ENCODE measurements at regions of chr9 and their contacts with region 1.

Region 1: GRCh38 chr9:32579706-32580331 is 6.9 kb upstream of the NDUFB6 start:
- DNase-seq: peak; percentile 60 to 87 (median 80)
- ATAC-seq: peak; percentile 78
- H3K4me3 ChIP-seq: no peak overlapping the region
- H3K4me3 Mint-ChIP-seq: no peak overlapping the region
- H3K27ac ChIP-seq: no peak overlapping the region
- H3K27ac Mint-ChIP-seq: no peak overlapping the region
- H3K4me1 ChIP-seq: no peaks in the 10 kb centered on the region
- H3K4me1 Mint-ChIP-seq: no peaks in the 10 kb centered on the region
- H3K27me3 ChIP-seq: no peaks in the 10 kb centered on the region
- H3K27me3 Mint-ChIP-seq: peaks cover 12% of the 10 kb centered on the region
- CTCF ChIP-seq: peak; percentile 98

Region 2: GRCh38 chr9:32431940-32432555 is 147.8 kb before region 1 on chr9:
- CTCF ChIA-PET with region 1: interaction called, 5 read pairs
- POLR2A ChIA-PET with region 1: no interaction called
- intact Hi-C with region 1: loop called (anchors 5 kb)
- DNase-seq: peak in 8 of 9 experiments; percentile 5 to 57 (median 50)
- ATAC-seq: peak; percentile 46
- H3K4me3 ChIP-seq: no peak overlapping the region
- H3K4me3 Mint-ChIP-seq: no peak overlapping the region
- H3K27ac ChIP-seq: no peak overlapping the region
- H3K27ac Mint-ChIP-seq: no peak overlapping the region
- H3K4me1 ChIP-seq: no peaks in the 10 kb centered on the region
- H3K4me1 Mint-ChIP-seq: no peaks in the 10 kb centered on the region
- H3K27me3 ChIP-seq: no peaks in the 10 kb centered on the region
- H3K27me3 Mint-ChIP-seq: no peaks in the 10 kb centered on the region
- CTCF ChIP-seq: peak; percentile 40

Region 3: DNA sequence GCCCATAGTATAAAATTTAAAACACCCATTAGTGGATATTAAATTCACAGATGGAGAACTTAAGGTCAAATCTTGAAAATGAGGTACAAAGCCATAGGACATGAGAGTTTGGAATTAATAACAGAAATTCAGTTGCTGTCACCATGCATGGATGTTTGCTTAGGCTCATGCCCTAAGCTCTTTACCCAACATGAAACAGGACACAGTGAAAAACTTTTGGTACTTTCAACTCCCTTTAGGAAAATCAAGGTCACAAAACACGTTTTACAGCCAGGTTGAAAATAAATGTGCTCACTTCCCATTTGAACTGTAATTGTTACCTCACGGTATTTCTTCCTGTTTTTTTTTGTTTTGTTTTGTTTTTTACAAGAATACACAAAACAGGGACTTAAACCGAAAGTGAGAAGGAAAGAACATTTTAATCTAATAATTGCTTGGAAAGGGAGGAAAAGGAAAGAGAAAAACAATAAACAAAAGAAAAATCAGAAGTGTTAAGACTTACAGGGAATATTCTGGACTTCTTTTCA is 21.3 kb before region 1 on chr9:
- CTCF ChIA-PET with region 1: interaction called, 13 read pairs
- POLR2A ChIA-PET with region 1: no interaction called
- intact Hi-C with region 1: no loop called
- DNase-seq: no peak
- ATAC-seq: no peak
- H3K4me3 ChIP-seq: no peak overlapping the region
- H3K4me3 Mint-ChIP-seq: no peak overlapping the region
- H3K27ac ChIP-seq: no peak overlapping the region
- H3K27ac Mint-ChIP-seq: peak overlapping the region; percentile 53
- H3K4me1 ChIP-seq: peaks cover 4% of the 10 kb centered on the region
- H3K4me1 Mint-ChIP-seq: peaks cover 46% of the 10 kb centered on the region
- H3K27me3 ChIP-seq: no peaks in the 10 kb centered on the region
- H3K27me3 Mint-ChIP-seq: no peaks in the 10 kb centered on the region
- CTCF ChIP-seq: no peak

Region 4: DNA sequence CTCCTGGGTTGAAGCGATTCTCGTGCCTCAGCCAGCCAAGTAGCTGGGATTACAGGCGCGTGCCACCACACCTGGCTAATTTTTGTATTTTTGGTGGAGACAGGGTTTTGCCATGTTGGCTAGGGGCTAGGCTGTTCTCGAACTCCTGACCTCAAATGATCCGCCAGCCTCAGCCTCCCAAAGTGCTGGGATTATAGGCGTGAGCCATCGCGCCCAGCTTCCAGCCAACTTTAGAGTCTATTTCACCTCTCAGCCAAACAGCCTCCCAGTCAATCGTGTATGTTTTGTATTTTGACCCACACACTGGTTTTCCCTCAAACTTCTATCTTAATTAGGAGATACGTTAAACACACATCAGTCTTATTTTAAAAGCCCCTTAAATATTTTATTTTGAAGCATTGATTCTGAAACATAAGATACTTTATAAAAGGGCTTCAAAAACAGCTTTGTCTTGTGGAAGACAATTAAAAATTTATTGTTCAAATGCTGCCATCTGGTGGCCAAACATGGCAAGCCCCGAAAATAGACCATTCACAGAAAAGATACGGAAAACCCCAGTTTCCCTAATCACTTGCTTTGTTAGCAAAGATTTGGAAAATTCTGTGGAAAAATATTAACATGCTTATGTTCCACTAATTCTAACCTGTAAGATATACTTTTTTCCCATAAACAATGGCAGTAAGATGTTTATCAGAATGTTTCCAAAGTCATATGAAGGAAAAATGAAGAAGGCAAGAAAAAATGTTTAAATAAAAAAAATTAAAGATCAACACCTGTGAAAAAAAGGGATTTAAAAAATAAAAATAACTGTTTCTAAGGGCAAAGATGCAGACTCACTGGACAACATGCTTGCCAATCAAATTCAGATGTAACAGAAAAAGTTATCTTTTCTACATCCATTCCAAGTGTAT is 388.5 kb after region 1 on chr9:
- CTCF ChIA-PET with region 1: interaction called, 25 read pairs
- POLR2A ChIA-PET with region 1: no interaction called
- intact Hi-C with region 1: loop called (anchors 1 to 2 kb)
- DNase-seq: peak; percentile 8 to 69 (median 55)
- ATAC-seq: no peak
- H3K4me3 ChIP-seq: no peak overlapping the region
- H3K4me3 Mint-ChIP-seq: no peak overlapping the region
- H3K27ac ChIP-seq: no peak overlapping the region
- H3K27ac Mint-ChIP-seq: peak overlapping the region; percentile 34
- H3K4me1 ChIP-seq: no peaks in the 10 kb centered on the region
- H3K4me1 Mint-ChIP-seq: peaks cover 2% of the 10 kb centered on the region
- H3K27me3 ChIP-seq: no peaks in the 10 kb centered on the region
- H3K27me3 Mint-ChIP-seq: no peaks in the 10 kb centered on the region
- CTCF ChIP-seq: peak; percentile 84

Region 5: DNA sequence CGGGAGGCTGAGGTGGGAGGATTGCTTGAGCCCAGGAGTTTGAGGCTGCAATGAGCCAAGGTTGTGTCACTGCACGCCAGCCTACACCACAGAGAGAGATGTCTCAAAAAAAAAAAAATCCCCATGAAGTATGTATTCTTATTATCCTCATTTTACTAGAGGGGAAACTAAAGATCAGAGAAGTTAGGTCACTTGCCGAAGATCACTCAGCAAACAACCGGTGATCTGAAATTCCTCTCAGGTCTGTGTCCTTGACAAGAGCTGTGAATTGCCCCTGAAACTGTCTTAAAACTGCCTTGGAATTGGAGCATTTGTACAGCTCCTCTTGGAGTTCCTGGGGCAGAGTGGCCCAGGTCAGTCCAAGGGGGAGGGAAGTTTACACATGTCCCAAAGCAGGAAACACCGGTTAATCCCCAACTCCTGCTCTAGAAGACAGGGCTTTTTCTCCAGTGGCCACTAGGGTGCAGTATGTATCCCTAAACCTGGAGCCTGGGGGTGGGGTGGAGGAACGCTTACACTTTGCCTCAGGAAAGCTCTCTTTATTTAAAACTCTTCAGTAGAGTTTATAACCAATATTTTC is 794.9 kb after region 1 on chr9:
- CTCF ChIA-PET with region 1: no interaction called
- POLR2A ChIA-PET with region 1: no interaction called
- intact Hi-C with region 1: no loop called
- DNase-seq: peak; percentile 22 to 79 (median 70)
- ATAC-seq: peak; percentile 95
- H3K4me3 ChIP-seq: no peak overlapping the region
- H3K4me3 Mint-ChIP-seq: peak overlapping the region; percentile 54
- H3K27ac ChIP-seq: no peak overlapping the region
- H3K27ac Mint-ChIP-seq: no peak overlapping the region
- H3K4me1 ChIP-seq: no peaks in the 10 kb centered on the region
- H3K4me1 Mint-ChIP-seq: peaks cover 9% of the 10 kb centered on the region
- H3K27me3 ChIP-seq: no peaks in the 10 kb centered on the region
- H3K27me3 Mint-ChIP-seq: no peaks in the 10 kb centered on the region
- CTCF ChIP-seq: peak; percentile 84